H1 (cell line): ENCODE measurements at regions of chr17 and their contacts with region 1.

Region 1: DNA sequence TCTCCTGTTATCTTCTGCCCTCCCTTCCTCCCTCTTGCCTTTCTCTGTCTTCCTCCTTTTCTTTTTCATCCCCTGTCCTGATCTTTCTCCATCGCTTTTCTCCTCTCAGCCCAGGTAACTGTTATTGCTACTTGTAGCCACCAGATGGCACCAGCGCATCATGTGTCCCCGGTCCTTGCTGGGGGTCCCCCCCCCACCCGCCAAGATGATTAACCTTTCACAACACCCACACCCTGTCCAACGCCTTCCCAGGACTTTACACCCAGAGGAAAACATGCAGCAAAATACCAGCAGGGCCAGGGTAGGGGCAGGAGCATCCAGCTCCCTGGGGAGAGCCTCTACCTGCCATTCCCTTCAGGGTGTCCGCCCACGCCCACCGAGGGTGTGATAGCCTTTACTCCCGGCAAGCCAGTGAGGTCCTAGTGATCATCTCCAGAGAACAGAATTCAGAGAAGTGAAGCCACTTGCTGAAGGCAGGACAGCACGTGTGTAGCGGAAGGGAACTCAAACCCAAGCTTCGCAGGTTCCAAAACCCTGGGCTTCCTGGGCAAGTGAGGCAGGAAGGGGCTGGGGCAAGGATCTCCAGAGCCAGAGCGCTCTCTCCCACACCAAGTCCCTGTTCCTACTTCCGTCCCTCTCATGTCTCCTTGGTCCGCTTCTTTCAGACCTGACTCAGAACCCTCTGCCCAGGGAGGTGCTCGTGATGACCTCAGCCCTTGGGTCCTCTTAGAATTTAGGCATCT is 13.5 kb upstream of the TAC4 start:
- DNase-seq: peak in 1 of 2 experiments; percentile 77
- H3K4me3 ChIP-seq: 0 out of 8 replicates have a peak overlapping the region, but pooled peaks of 1 of the 4 experiments have one; percentile 10
- H3K27ac ChIP-seq: no peak overlapping the region
- H3K4me1 ChIP-seq: peaks cover 0 to 29% (median 19%) of the 10 kb centered on the region in 4 experiments; a peak in 6 of 7 replicates
- H3K27me3 ChIP-seq: peaks cover 0 to 3% (median under 1%) of the 10 kb centered on the region in 4 experiments; a peak in 3 of 7 replicates
- CTCF ChIP-seq: peak; percentile 75 to 89 (median 81)
- EP300 ChIP-seq: no peak
- POLR2A ChIP-seq: no peak
- RAD21 ChIP-seq: peak; percentile 97

Region 2: GRCh38 chr17:49873466-49873865 is 12.1 kb after region 1 on chr17:
- CTCF ChIA-PET with region 1: interaction called, 138 read pairs
- POLR2A ChIA-PET with region 1: interaction called, 7 read pairs
- DNase-seq: no peak
- H3K4me3 ChIP-seq: no peak overlapping the region
- H3K27ac ChIP-seq: no peak overlapping the region
- H3K4me1 ChIP-seq: peaks cover 0 to 16% (median 11%) of the 10 kb centered on the region in 4 experiments; a peak in 6 of 7 replicates
- H3K27me3 ChIP-seq: no peaks in the 10 kb centered on the region; a peak in 1 of 7 replicates
- CTCF ChIP-seq: no peak
- EP300 ChIP-seq: no peak
- POLR2A ChIP-seq: no peak
- RAD21 ChIP-seq: no peak

Region 3: DNA sequence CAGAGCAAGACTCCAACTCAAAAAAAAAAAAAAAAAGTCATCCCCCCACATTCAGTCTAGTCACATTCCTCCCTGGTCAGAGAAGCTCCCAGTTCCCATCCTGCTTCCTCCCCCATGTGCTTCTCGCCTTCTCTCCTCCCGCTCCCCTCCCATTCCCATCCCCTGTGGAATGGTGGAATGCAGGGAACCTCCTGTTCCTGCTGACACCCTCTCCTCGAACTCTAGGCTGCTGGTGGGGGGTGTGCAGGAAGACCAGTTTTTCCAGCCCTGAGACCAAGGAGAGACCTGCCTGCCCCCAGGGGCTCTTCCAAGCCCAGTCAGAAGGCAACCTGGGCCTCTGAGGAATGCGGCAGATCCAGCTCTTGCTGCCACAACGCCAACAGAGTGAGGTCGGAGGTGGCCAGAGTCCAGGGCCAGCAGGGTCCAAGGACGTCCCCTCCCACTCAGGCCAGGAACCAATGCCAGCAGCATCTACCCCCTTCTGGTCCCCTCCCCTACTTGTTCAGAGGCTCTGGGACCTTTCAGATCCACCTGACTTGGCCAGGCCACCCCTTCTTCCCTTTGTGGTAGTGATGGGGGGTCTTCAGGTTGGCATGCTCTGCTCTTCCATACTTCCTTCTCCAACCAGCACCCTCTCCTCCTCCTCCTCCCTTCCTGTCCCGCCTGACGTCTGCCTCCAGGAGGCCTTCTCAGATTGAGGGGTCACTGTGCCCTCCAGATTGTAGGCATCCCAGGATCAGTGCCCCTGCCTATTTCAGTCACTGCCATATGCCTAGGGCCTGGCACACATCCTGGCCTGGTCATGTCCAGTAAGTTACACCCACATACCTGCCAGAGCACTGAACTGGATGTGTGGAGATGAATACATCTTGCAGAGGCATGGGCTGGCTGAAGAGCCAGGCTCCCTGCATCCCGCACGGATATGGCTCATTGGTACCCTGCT is 26.0 kb after region 1 on chr17:
- CTCF ChIA-PET with region 1: interaction called, 14 read pairs
- POLR2A ChIA-PET with region 1: interaction called, 3 read pairs
- DNase-seq: no peak
- H3K4me3 ChIP-seq: peak overlapping the region in 1 of 4 experiments; percentile 2; a peak in 1 of 8 replicates
- H3K27ac ChIP-seq: no peak overlapping the region
- H3K4me1 ChIP-seq: peaks cover 4 to 16% (median 13%) of the 10 kb centered on the region in 4 experiments
- H3K27me3 ChIP-seq: peaks cover 3 to 26% (median 20%) of the 10 kb centered on the region in 4 experiments
- CTCF ChIP-seq: no peak
- EP300 ChIP-seq: no peak
- POLR2A ChIP-seq: no peak
- RAD21 ChIP-seq: no peak; a peak in 1 of 4 replicates

Region 4: DNA sequence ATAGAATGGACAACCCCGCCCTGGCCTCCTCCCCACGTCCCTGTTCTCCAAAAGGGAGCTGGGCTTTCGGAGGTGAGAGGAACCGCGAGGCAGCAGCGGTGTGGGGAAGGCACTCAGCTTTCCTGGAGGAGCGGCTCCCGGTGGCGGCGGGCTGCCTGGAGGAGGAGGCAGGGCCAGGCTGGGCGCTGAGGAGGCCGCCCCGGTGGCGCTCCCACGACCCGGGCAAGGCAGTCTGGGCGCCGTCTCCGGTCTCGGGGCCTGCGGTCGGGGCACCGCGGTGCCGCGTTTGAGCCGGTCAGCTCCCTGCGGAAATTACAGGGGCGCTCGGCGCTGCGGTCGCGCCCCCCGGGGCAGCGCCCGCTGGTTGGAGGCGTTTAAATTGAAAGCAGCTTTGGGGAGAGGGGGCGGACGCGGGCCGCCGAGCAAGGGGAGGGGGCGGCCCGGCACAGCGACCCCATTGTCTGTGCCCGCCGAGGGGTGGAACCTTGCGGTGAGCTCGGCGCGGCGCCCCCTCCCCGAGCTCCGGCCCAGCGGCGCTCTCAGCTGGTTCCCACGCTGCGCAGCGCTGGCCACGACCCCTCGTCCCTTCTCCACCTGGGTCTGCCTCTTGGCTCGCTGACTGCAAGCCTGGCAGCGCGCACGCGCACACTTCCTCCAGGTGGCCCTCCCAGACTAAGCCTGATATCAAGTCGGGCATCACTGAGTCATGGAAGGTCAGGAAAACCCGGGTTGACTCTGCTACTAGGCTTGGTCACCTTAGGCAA is 49.0 kb after region 1 on chr17:
- CTCF ChIA-PET with region 1: interaction called, 17 read pairs
- POLR2A ChIA-PET with region 1: interaction called, 5 read pairs
- DNase-seq: peak in 1 of 2 experiments; percentile 82
- H3K4me3 ChIP-seq: peak overlapping the region; percentile 42 to 69 (median 60)
- H3K27ac ChIP-seq: no peak overlapping the region
- H3K4me1 ChIP-seq: peaks cover 1 to 24% (median 17%) of the 10 kb centered on the region in 4 experiments
- H3K27me3 ChIP-seq: peaks cover 12 to 72% (median 66%) of the 10 kb centered on the region in 4 experiments
- CTCF ChIP-seq: no peak
- EP300 ChIP-seq: no peak
- POLR2A ChIP-seq: no peak
- RAD21 ChIP-seq: no peak

Region 5: DNA sequence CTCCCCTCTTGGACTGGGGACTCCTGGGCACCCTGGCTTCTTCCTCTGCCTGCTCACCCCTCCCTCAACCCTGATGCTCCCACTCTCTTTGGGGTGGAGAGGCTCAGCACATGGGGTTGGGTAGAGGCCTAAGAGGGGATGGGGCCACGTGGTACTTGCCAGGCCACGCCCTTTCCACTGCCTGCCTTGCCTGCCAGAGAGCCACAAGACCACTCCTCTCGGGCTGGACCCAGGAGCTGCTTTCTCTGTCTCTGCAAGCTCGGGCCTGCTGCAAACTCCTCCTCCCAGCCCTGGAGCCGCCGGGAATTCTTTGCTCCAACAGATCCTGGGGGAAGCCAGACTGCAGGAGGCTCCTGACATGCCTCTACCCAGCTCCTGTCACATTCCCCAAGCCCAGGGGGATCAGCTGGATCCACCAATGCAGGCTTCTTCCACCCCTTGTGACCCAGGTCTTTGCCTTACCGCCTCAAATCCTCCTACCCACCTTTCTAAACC is 119.4 kb after region 1 on chr17:
- CTCF ChIA-PET with region 1: interaction called, 547 read pairs
- POLR2A ChIA-PET with region 1: no interaction called
- DNase-seq: peak; percentile 64 to 72
- H3K4me3 ChIP-seq: no peak overlapping the region
- H3K27ac ChIP-seq: no peak overlapping the region
- H3K4me1 ChIP-seq: peaks cover 3 to 25% (median 14%) of the 10 kb centered on the region in 4 experiments
- H3K27me3 ChIP-seq: peaks cover 1 to 37% (median 18%) of the 10 kb centered on the region in 4 experiments
- CTCF ChIP-seq: no peak
- EP300 ChIP-seq: no peak
- POLR2A ChIP-seq: no peak
- RAD21 ChIP-seq: 0 out of 4 replicates have a peak, but pooled peaks of 1 of the 2 experiments have one; percentile 13